Common myeloid progenitor, CD34-positive (primary cell): ENCODE measurements at regions of chr1 and their contacts with region 1.

Region 1: DNA sequence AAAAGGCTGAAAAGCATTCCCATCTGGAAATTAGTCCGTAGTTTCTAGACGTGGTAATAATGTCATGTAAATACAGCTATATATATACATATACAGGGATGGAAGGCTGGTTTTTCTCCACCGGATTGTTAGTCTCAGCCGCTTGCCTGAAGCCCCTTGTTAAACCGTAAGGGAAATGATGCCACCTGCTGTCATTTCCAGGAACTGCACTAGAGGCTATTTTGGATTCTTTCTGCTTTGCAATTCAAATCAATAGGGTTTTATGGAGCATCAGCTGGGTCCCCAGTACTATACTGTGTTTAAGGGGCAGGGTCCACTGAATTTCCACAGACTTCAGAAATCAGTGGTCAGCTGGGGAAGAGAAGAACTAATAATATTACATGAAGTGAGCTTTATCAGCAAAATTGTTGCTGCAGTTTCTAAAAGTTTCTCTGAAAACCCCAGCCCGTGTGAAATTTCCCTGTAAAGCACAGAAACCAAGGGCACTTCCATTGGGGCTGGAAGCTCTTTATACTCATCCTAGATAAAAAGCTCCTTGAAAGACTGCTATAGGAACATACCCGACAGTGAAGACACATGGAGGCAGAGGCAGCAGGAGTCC is 33.8 kb upstream of the MPZL1 start:
- DNase-seq: peak; percentile 81 to 89 (median 83)
- H3K4me3 ChIP-seq: no peak overlapping the region
- H3K27ac ChIP-seq: no peak overlapping the region
- H3K4me1 ChIP-seq: peaks cover 0 to 5% (median 4%) of the 10 kb centered on the region in 4 experiments
- H3K27me3 ChIP-seq: no peaks in the 10 kb centered on the region

Region 2: GRCh38 chr1:167553136-167554027 is 134.6 kb before region 1 on chr1 and contains the start of gene CREG1:
- CTCF ChIA-PET with region 1: interaction called, 15 read pairs
- POLR2A ChIA-PET with region 1: no interaction called
- DNase-seq: peak; percentile 93 to 96 (median 96)
- H3K4me3 ChIP-seq: peak within 1 kb of the TSS; percentile 76 to 90 (median 84)
- H3K27ac ChIP-seq: peak within 1 kb of the TSS; percentile 40 to 96
- H3K4me1 ChIP-seq: peaks cover 41 to 63% (median 55%) of the 10 kb centered on the region in 4 experiments
- H3K27me3 ChIP-seq: no peaks in the 10 kb centered on the region

Region 3: GRCh38 chr1:167594822-167595221 is 93.2 kb before region 1 on chr1:
- CTCF ChIA-PET with region 1: interaction called, 84 read pairs
- POLR2A ChIA-PET with region 1: interaction called, 3 read pairs
- DNase-seq: no peak
- H3K4me3 ChIP-seq: no peak overlapping the region
- H3K27ac ChIP-seq: no peak overlapping the region
- H3K4me1 ChIP-seq: peaks cover 0 to 5% (median 2%) of the 10 kb centered on the region in 4 experiments
- H3K27me3 ChIP-seq: no peaks in the 10 kb centered on the region

Region 4: GRCh38 chr1:167635156-167635648 is 52.8 kb before region 1 on chr1:
- CTCF ChIA-PET with region 1: interaction called, 17 read pairs
- POLR2A ChIA-PET with region 1: no interaction called
- DNase-seq: no peak
- H3K4me3 ChIP-seq: no peak overlapping the region
- H3K27ac ChIP-seq: peak overlapping the region; percentile 34 to 62
- H3K4me1 ChIP-seq: peaks cover 54 to 72% (median 68%) of the 10 kb centered on the region in 4 experiments
- H3K27me3 ChIP-seq: no peaks in the 10 kb centered on the region

Region 5: DNA sequence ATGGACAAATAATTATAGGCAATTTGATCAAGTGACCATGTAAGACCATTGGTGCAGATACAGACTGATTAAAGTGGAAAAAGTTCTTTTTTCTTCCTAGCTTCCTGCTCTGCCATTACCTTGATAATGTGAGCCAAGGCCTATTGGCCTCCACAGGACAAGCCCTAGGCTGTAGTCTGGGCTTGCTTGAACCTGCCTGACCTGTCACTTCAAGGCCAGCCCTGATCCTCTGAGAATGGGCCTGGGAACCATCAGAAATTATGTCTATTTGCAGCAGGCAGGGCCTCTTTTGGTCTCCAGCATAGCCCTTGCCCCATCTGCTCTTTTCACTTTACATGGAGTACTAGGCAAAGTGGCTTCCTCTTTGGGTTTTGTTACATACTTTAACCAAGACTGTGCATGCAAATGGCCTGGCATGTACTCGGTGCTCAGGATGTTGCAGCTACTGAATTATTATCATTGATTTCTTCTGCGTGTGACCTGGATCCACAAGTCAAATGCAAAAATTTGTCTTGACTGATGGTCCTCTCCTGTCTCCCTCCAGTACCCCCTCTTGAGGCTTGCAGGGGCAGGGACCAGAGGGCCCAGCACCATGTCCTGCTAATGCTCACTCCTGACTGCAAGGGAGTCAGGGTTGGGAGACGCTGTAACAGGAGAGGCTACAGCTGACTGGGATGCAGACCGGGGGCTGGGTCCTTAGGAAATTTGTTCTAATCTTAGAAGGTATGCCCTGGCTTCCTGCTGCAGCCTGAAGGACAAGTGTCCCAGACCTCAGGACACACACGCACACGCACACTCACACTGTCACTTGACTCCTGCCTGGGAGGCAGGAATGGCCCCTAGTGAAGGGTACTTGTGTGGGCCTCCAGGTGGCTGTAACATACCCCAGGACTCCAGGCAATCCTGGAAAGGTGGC is 18.6 kb before region 1 on chr1:
- CTCF ChIA-PET with region 1: interaction called, 30 read pairs
- POLR2A ChIA-PET with region 1: no interaction called
- DNase-seq: no peak
- H3K4me3 ChIP-seq: no peak overlapping the region
- H3K27ac ChIP-seq: no peak overlapping the region
- H3K4me1 ChIP-seq: peaks cover 0 to 6% (median 2%) of the 10 kb centered on the region in 4 experiments
- H3K27me3 ChIP-seq: no peaks in the 10 kb centered on the region

Region 6: DNA sequence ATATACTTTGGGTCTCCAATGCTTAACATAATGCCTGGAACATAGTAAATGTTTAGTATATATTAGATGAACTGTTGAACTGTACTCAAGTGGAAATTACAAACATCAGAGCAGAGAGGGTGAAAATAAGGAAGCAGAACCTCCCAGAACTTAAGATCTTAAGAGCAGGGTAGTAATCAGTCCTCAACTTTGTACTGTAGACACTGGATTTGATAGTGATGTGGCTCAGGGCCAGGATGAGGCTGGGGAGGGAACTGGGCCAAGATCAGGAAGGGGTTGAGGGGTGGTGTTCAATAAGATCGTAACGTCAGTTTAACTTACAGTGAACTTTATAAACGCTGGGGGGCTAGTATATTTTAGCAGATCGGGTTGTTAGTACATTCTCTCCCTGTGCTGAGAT is 49.1 kb after region 1 on chr1:
- CTCF ChIA-PET with region 1: no interaction called
- POLR2A ChIA-PET with region 1: no interaction called
- DNase-seq: peak in 1 of 3 donors; percentile 33
- H3K4me3 ChIP-seq: no peak overlapping the region
- H3K27ac ChIP-seq: no peak overlapping the region
- H3K4me1 ChIP-seq: peaks cover 0 to 2% (median 0%) of the 10 kb centered on the region in 4 experiments
- H3K27me3 ChIP-seq: no peaks in the 10 kb centered on the region